Endothelial cell of umbilical vein (primary cell): ENCODE measurements at regions of chr14 and their contacts with region 1.

Region 1: GRCh38 chr14:24411443-24412389 is 12.9 kb downstream of the NYNRIN start:
- DNase-seq: peak; percentile 70
- H3K4me3 ChIP-seq: no peak overlapping the region
- H3K27ac ChIP-seq: no peak overlapping the region
- H3K4me1 ChIP-seq: no peaks in the 10 kb centered on the region
- H3K27me3 ChIP-seq: no peaks in the 10 kb centered on the region
- CTCF ChIP-seq: peak; percentile 67 to 76
- POLR2A ChIP-seq: no peak

Region 2: GRCh38 chr14:24339284-24340151 is 72.2 kb before region 1 on chr14 and contains the start of gene RIPK3:
- CTCF ChIA-PET with region 1: interaction called, 73 read pairs
- POLR2A ChIA-PET with region 1: no interaction called
- dilution Hi-C with region 1: no loop called
- intact Hi-C with region 1: loop called (anchors 1 kb)
- DNase-seq: peak; percentile 23
- H3K4me3 ChIP-seq: peak within 1 kb of the TSS in 2 of 3 experiments; percentile 5 to 24
- H3K27ac ChIP-seq: no peak within 1 kb of the TSS
- H3K4me1 ChIP-seq: peaks cover 24% of the 10 kb centered on the region
- H3K27me3 ChIP-seq: peaks cover 5 to 9% of the 10 kb centered on the region in 2 experiments
- CTCF ChIP-seq: no peak
- POLR2A ChIP-seq: no peak
- total RNA-seq, gene RIPK3: 5.1 and 9.0 TPM in 2 replicates

Region 3: DNA sequence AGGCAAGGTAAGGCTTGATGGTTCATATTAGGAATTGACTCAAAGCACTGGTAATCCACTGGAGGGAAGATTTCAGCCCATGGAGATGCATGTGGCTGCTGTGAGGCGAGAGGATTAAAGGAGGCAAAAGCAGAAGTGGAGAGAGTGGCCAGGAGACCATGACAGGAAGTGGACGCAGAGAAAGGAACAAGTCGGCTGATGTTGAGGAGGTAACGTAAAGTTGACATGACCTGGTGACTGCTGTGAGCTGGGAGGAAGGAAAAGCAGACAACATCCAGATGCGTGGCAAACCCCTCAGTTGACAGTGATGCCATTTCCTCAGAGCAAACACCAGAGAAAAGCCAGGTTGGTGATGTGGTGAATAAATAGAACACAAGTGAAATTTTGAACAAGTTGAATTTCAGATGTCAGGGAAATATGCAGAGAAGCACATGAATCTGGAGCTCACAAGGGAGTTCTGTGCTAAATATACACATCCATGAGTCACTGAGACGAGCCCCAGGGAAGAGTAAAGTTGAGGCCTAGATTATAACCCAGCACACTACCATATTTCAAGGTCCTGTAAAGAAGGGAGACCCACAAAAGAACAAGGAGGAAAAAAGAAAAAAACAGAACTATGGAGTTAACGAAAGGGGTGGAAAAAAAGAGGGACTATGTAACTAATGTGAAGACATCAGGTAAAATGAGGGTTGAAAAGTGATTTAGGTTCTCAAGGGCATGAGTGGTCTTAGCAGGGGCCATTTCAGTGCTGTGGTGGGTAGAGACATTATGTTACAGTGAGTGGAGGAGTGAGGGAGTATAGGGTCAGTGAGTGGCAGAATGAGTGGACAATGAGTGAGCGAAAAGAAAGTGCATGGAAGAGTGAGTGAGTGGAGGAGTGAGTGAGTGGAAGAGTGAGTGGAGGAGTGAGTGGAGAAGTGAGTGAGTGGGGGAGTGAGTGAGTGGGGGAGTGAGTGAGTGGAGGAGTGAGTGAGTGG is 283.8 kb after region 1 on chr14:
- CTCF ChIA-PET with region 1: no interaction called
- POLR2A ChIA-PET with region 1: no interaction called
- dilution Hi-C with region 1: no loop called
- intact Hi-C with region 1: no loop called
- DNase-seq: no peak
- H3K4me3 ChIP-seq: no peak overlapping the region
- H3K27ac ChIP-seq: no peak overlapping the region
- H3K4me1 ChIP-seq: no peaks in the 10 kb centered on the region
- H3K27me3 ChIP-seq: no peaks in the 10 kb centered on the region
- CTCF ChIP-seq: no peak
- POLR2A ChIP-seq: no peak